ENCODE measurements at regions of chr11 and their contacts with region 1.

Region 1: GRCh38 chr11:38756537-38756936 is 2158.5 kb upstream of the RAG2 start:
- DNase-seq: no peak
- ATAC-seq: no peak
- H3K4me3 ChIP-seq: no peak overlapping the region
- H3K4me3 Mint-ChIP-seq: no peak overlapping the region
- H3K27ac ChIP-seq: no peak overlapping the region
- H3K27ac Mint-ChIP-seq: no peak overlapping the region
- H3K4me1 ChIP-seq: no peaks in the 10 kb centered on the region
- H3K4me1 Mint-ChIP-seq: no peaks in the 10 kb centered on the region
- H3K27me3 ChIP-seq: no peaks in the 10 kb centered on the region
- H3K27me3 Mint-ChIP-seq: no peaks in the 10 kb centered on the region

Region 2: GRCh38 chr11:38693306-38693705 is 63.2 kb before region 1 on chr11:
- CTCF ChIA-PET with region 1: no interaction called
- POLR2A ChIA-PET with region 1: no interaction called
- intact Hi-C with region 1: loop called in 1 of 2 experiments (anchors 10 kb)
- DNase-seq: no peak
- ATAC-seq: no peak
- H3K4me3 ChIP-seq: no peak overlapping the region
- H3K4me3 Mint-ChIP-seq: no peak overlapping the region
- H3K27ac ChIP-seq: no peak overlapping the region
- H3K27ac Mint-ChIP-seq: no peak overlapping the region
- H3K4me1 ChIP-seq: no peaks in the 10 kb centered on the region
- H3K4me1 Mint-ChIP-seq: no peaks in the 10 kb centered on the region
- H3K27me3 ChIP-seq: no peaks in the 10 kb centered on the region
- H3K27me3 Mint-ChIP-seq: no peaks in the 10 kb centered on the region

Region 3: GRCh38 chr11:39651857-39652461 is 895.4 kb after region 1 on chr11:
- CTCF ChIA-PET with region 1: no interaction called
- POLR2A ChIA-PET with region 1: no interaction called
- intact Hi-C with region 1: no loop called
- DNase-seq: no peak
- ATAC-seq: no peak
- H3K4me3 ChIP-seq: no peak overlapping the region
- H3K4me3 Mint-ChIP-seq: no peak overlapping the region
- H3K27ac ChIP-seq: no peak overlapping the region
- H3K27ac Mint-ChIP-seq: no peak overlapping the region
- H3K4me1 ChIP-seq: no peaks in the 10 kb centered on the region
- H3K4me1 Mint-ChIP-seq: no peaks in the 10 kb centered on the region
- H3K27me3 ChIP-seq: no peaks in the 10 kb centered on the region
- H3K27me3 Mint-ChIP-seq: no peaks in the 10 kb centered on the region

Measured in naive thymus-derived CD4-positive, alpha-beta T cell (primary cell).